ENCODE measurements at regions of chr6 and their contacts with region 1.

Region 1: DNA sequence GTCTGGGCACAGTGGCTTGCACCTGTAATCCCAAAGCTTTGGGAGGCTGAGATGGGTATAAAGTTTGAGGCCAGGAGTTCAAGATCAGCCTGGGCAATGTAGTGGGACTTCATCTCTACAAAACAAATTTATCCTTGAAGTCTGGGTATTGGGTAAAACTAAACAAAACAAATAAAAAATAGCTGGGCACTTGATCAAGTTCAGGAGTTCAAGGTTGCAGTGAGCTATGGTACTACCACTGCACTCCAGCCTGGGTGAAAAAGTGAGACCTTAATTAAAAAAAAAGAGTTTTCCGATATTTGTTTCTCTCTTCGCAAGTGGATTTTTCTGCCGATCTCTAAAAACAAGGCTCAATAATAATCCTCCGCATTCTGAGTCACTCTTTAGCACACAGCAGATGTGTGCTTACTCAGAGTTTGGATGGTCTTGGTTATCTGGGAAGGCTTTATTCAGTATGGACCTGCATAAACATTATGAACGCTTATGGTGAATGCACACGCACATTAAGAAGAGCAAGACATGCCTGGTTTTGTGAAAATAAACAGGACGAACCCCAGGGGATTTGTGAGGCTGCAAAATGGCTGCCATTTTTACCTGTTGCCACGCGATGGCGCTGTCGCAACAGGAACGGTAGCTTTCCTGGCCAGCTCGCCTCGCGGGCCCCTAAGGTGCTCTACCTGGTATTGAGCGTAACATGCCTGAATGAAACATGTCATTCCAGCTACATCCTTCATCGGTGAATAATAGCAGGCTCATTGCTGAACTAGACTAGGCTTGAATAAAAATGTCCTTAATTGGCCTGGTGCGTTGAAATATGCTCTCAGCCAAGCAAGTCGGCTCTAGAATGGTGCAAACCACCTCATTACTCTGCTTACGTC is 6.0 kb downstream of the OPN5 start:
- DNase-seq: peak; percentile 44
- CTCF ChIP-seq: peak; percentile 92

Region 2: GRCh38 chr6:47490676-47491075 is 297.2 kb before region 1 on chr6:
- in situ Hi-C with region 1: no loop called
- DNase-seq: no peak
- CTCF ChIP-seq: no peak

Region 3: DNA sequence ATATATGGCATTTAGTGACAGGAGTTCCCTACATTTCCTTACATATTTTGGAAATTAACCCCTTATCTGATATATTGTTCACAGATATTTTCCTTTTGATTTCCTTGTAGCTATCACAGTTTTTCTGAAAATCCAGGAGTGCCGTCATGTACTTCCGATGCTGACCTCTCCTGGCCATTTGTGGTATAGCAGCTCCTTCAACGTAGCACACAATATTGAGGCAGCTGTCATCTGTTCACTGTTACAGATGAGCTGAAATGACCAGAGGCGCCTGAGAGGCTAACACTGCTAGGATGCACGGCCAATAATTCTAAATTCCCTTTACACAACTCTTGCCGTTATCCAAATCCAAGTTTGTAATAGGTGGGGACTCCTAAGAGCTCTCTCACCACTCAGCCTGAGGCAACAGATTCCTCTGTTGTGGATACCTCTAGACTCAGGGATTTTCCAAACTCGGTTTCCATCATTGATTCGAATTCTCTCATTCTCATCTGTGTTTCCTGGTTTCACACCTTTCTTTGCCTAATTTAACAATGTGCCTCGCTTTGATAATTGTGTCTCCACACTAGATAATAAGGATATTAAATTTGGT is 1622.2 kb after region 1 on chr6:
- in situ Hi-C with region 1: loop called (anchors 25 kb)
- DNase-seq: peak; percentile 31
- CTCF ChIP-seq: peak; percentile 91